Caco-2 (cell line): ENCODE measurements at regions of chr7 and their contacts with region 1.

Region 1: GRCh38 chr7:104983578-104984539 is 30.1 kb upstream of the KMT2E start:
- DNase-seq: peak; percentile 88 to 90
- H3K4me3 ChIP-seq: peak overlapping the region; percentile 41
- H3K4me3 Mint-ChIP-seq: peak overlapping the region; percentile 88
- H3K27ac Mint-ChIP-seq: peak overlapping the region; percentile 99
- H3K4me1 ChIP-seq: peaks cover 55% of the 10 kb centered on the region
- H3K4me1 Mint-ChIP-seq: peaks cover 25% of the 10 kb centered on the region
- H3K27me3 ChIP-seq: no peaks in the 10 kb centered on the region
- H3K27me3 Mint-ChIP-seq: no peaks in the 10 kb centered on the region
- CTCF ChIP-seq: peak in 1 of 2 experiments; percentile 72

Region 2: DNA sequence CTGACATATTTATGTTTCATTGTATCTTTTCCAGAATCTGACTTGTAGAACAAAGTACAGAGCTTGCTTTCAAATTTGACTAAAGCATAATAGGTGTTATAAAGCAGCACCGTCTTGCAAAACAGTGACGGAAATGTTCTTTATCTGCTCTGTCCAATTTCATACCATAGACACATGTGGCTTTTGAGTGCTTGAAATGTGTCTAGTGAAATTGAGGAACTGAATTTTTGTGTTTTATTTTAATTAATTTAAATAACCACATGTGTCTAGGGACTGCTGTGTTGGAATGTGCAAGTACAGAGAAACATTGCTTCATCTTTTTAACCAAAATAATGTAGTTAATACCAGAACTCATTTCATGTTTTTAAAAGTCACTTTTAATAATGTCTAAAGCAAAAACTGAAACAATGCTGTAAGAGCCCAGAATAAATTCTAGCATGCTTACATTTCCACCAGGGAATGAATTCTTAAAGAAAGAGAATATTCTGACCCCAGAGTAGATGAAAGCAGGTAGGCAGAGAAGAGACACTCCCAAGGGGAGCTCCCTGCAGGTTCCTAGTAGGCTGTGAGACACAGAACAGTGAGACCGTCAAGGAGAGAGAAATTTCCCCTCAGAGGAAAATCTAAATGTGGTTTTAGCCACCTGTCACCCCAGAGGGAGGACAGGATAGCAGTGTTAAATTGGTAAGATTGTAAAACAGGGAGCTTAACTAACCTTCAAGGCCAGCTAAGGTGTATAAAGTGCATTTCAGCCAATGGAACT is 145.1 kb before region 1 on chr7:
- CTCF ChIA-PET with region 1: no interaction called
- POLR2A ChIA-PET with region 1: no interaction called
- intact Hi-C with region 1: no loop called
- DNase-seq: no peak
- H3K4me3 ChIP-seq: no peak overlapping the region
- H3K4me3 Mint-ChIP-seq: no peak overlapping the region
- H3K27ac Mint-ChIP-seq: no peak overlapping the region
- H3K4me1 ChIP-seq: no peaks in the 10 kb centered on the region
- H3K4me1 Mint-ChIP-seq: no peaks in the 10 kb centered on the region
- H3K27me3 ChIP-seq: no peaks in the 10 kb centered on the region; the same call in 1 of the 2 replicates
- H3K27me3 Mint-ChIP-seq: peaks cover 13% of the 10 kb centered on the region
- CTCF ChIP-seq: no peak

Region 3: DNA sequence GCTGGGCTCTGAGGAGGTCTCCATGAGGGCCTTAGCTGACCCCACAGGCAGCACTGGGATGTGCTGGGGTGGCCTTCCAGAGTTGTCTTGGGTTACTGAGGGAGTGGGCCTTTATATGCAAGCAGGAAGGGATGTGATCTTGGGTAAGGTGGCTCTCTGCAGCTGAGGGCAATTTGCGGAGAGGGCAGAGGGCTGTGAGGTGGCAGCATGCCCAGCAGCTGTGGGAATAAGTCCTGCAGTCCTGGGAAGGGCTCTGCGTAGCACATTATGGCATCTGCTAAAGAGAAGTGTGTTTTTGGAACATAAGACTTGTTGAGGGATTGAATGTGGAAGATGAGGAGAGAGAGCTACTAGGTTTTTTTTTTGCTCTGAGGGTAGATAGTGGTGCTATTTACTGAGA is 69.4 kb before region 1 on chr7:
- CTCF ChIA-PET with region 1: no interaction called
- POLR2A ChIA-PET with region 1: no interaction called
- intact Hi-C with region 1: no loop called
- DNase-seq: no peak
- H3K4me3 ChIP-seq: no peak overlapping the region
- H3K4me3 Mint-ChIP-seq: no peak overlapping the region
- H3K27ac Mint-ChIP-seq: no peak overlapping the region
- H3K4me1 ChIP-seq: no peaks in the 10 kb centered on the region
- H3K4me1 Mint-ChIP-seq: no peaks in the 10 kb centered on the region
- H3K27me3 ChIP-seq: no peaks in the 10 kb centered on the region
- H3K27me3 Mint-ChIP-seq: peaks cover 6% of the 10 kb centered on the region
- CTCF ChIP-seq: no peak

Region 4: DNA sequence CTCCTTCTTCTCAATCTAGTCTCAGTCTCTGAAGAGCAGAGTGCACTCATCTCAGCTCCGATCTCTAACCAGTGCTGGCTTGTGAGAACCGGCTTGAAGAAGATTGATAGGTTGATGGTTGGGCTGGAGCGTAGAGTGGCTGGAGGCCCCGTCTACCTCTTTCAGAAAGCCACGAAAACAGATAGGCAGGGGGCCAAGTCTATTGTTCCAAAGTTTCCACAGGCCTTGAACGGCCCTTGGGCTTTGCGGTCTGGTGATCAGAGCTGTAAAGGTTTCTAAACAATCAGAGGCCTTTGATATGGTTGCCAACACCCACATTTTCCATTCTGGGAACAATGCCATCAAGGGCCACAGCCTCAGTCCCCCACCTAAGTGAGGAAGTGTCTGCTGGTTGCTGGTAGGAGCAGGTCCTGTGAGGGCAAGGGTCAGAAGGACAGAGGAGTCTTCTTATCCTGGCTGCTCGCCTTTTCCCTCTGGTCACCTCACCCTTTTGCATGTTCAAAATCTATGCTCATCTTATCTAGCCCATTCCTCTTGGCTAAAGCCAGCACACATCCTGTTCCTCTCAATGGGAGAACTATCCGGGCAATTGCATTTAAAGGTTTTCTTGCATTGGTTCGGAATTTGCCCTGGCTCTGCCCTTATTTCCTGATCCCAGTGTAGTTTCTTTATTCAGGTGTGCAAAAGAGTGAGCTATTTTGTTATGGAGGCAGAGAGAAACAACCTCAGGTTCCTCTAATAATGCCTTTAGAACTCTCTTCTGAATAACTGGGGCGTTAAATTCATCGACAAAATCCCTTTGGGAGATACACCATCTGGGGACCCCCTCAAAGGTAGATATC is 40.1 kb before region 1 on chr7:
- CTCF ChIA-PET with region 1: no interaction called
- POLR2A ChIA-PET with region 1: no interaction called
- intact Hi-C with region 1: no loop called
- DNase-seq: peak; percentile 13 to 79
- H3K4me3 ChIP-seq: no peak overlapping the region
- H3K4me3 Mint-ChIP-seq: no peak overlapping the region
- H3K27ac Mint-ChIP-seq: peak overlapping the region; percentile 82
- H3K4me1 ChIP-seq: peaks cover 23% of the 10 kb centered on the region
- H3K4me1 Mint-ChIP-seq: peaks cover 7% of the 10 kb centered on the region
- H3K27me3 ChIP-seq: no peaks in the 10 kb centered on the region
- H3K27me3 Mint-ChIP-seq: no peaks in the 10 kb centered on the region
- CTCF ChIP-seq: no peak

Region 5: DNA sequence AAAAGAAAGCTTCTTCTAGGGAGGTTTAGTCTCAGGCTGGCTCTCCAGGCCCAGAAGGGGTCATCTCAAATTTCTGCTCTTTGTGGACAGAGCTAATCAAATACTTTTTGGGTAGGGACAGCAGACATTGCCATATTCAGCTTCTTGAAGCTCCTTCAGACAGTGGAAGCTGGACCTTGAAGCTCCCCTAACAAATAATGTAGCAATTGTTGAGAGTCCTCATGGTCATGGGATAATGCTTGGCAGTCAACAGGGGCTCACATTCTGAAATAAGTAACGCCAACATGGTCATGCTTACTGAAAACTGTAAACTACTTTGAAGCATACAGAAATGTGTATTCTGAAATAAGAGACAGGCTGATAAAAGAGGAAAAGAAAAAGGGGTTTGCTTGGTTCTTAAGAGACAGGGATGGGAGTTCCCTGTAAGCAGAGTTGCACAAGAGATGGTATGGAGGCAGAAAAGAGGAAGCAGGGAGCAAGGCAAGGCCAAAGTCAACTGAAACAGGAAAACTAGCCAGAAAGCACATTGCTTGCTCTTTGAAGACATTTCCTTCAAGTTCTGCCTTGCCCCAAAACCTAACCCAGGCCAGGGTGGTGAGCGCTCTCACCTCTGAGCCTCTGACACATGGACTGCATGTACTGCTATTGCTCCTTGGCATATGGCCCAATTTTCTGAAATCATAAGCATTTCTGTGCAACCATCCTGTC is 23.0 kb before region 1 on chr7:
- CTCF ChIA-PET with region 1: no interaction called
- POLR2A ChIA-PET with region 1: no interaction called
- intact Hi-C with region 1: no loop called
- DNase-seq: no peak
- H3K4me3 ChIP-seq: no peak overlapping the region
- H3K4me3 Mint-ChIP-seq: no peak overlapping the region
- H3K27ac Mint-ChIP-seq: no peak overlapping the region
- H3K4me1 ChIP-seq: no peaks in the 10 kb centered on the region
- H3K4me1 Mint-ChIP-seq: no peaks in the 10 kb centered on the region
- H3K27me3 ChIP-seq: no peaks in the 10 kb centered on the region
- H3K27me3 Mint-ChIP-seq: no peaks in the 10 kb centered on the region
- CTCF ChIP-seq: no peak

Region 6: GRCh38 chr7:105006437-105007133 is 22.7 kb after region 1 on chr7:
- CTCF ChIA-PET with region 1: interaction called, 11 read pairs
- POLR2A ChIA-PET with region 1: interaction called, 20 read pairs
- intact Hi-C with region 1: loop called (anchors 1 kb)
- DNase-seq: peak; percentile 80 to 90
- H3K4me3 ChIP-seq: no peak overlapping the region
- H3K4me3 Mint-ChIP-seq: peak overlapping the region; percentile 64
- H3K27ac Mint-ChIP-seq: peak overlapping the region; percentile 64
- H3K4me1 ChIP-seq: peaks cover 76% of the 10 kb centered on the region
- H3K4me1 Mint-ChIP-seq: peaks cover 35% of the 10 kb centered on the region
- H3K27me3 ChIP-seq: no peaks in the 10 kb centered on the region
- H3K27me3 Mint-ChIP-seq: no peaks in the 10 kb centered on the region
- CTCF ChIP-seq: no peak

Region 7: GRCh38 chr7:105046414-105046813 is 62.6 kb after region 1 on chr7:
- CTCF ChIA-PET with region 1: interaction called, 3 read pairs
- POLR2A ChIA-PET with region 1: no interaction called
- intact Hi-C with region 1: loop called (anchors 1 kb)
- DNase-seq: no peak
- H3K4me3 ChIP-seq: no peak overlapping the region
- H3K4me3 Mint-ChIP-seq: no peak overlapping the region
- H3K27ac Mint-ChIP-seq: peak overlapping the region; percentile 23
- H3K4me1 ChIP-seq: peaks cover 35% of the 10 kb centered on the region
- H3K4me1 Mint-ChIP-seq: peaks cover 40% of the 10 kb centered on the region
- H3K27me3 ChIP-seq: no peaks in the 10 kb centered on the region
- H3K27me3 Mint-ChIP-seq: no peaks in the 10 kb centered on the region
- CTCF ChIP-seq: no peak